ENCODE measurements at regions of chr7 and their contacts with region 1.

Region 1: DNA sequence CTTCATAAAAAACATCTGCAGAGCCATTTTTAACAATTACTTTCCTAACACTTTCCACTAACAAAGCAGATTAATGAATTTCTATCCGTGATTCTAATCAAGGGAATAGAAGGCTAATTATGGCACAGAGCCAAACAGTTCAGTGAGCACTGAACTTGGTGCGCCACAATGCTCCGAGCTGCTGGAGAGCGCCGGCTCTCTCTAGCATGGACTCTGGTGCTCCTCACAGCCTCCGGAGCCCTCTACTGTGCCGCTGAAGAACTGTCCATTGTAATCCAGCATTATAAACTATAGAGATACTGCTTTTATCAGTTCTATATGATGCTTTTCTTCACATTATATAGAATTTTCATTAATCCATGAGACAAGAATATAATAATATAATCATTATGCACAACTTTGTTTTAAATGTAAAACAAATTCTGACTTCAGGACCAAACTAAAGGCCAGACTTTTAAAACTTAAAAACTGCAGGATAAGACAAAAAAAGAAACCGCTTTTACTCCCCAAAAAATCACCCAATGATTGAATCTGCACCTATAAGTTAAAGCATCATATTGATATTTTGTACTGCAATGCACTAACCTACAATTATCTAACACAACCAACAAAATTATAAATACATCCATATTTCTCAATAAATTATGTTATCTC is 123.6 kb downstream of the RNF32 start:
- DNase-seq: peak; percentile 64
- H3K4me3 ChIP-seq: no peak overlapping the region
- H3K27ac ChIP-seq: no peak overlapping the region
- H3K4me1 ChIP-seq: no peaks in the 10 kb centered on the region
- H3K27me3 ChIP-seq: no peaks in the 10 kb centered on the region
- CTCF ChIP-seq: peak in 3 of 4 experiments; percentile 53 to 74 (median 73)
- POLR2A ChIP-seq: no peak

Region 2: GRCh38 chr7:155804897-155805825 is 959.0 kb before region 1 on chr7:
- intact Hi-C with region 1: loop called (anchors 10 kb)
- DNase-seq: peak; percentile 26
- H3K4me3 ChIP-seq: peak overlapping the region; percentile 17 to 22
- H3K27ac ChIP-seq: no peak overlapping the region
- H3K4me1 ChIP-seq: peaks cover 9% of the 10 kb centered on the region
- H3K27me3 ChIP-seq: peaks cover 16% of the 10 kb centered on the region
- CTCF ChIP-seq: peak in 3 of 4 experiments; percentile 35 to 59 (median 51)
- POLR2A ChIP-seq: no peak

Region 3: GRCh38 chr7:156892821-156893706 is 128.9 kb after region 1 on chr7 and contains the start of gene LMBR1:
- intact Hi-C with region 1: no loop called
- DNase-seq: peak; percentile 94
- H3K4me3 ChIP-seq: peak within 1 kb of the TSS; percentile 88 to 96
- H3K27ac ChIP-seq: peak within 1 kb of the TSS; percentile 89 to 96
- H3K4me1 ChIP-seq: no peaks in the 10 kb centered on the region
- H3K27me3 ChIP-seq: no peaks in the 10 kb centered on the region
- CTCF ChIP-seq: peak; percentile 7 to 92 (median 70)
- POLR2A ChIP-seq: peak; percentile 83
- total RNA-seq, gene LMBR1: 44.7 to 168 TPM

Region 4: GRCh38 chr7:156949541-156950380 is 185.6 kb after region 1 on chr7 and contains the start of gene NOM1:
- intact Hi-C with region 1: no loop called
- DNase-seq: peak; percentile 75
- H3K4me3 ChIP-seq: peak within 1 kb of the TSS; percentile 84 to 91
- H3K27ac ChIP-seq: peak within 1 kb of the TSS; percentile 14 to 58
- H3K4me1 ChIP-seq: peaks cover 9% of the 10 kb centered on the region
- H3K27me3 ChIP-seq: no peaks in the 10 kb centered on the region
- CTCF ChIP-seq: peak; percentile 81 to 95 (median 90)
- POLR2A ChIP-seq: no peak
- total RNA-seq, gene NOM1: 10.4 to 24.3 TPM

Measured in prostate gland (tissue), 2 donors.